Panc1 (cell line): ENCODE measurements at regions of chr6 and their contacts with region 1.

Region 1: DNA sequence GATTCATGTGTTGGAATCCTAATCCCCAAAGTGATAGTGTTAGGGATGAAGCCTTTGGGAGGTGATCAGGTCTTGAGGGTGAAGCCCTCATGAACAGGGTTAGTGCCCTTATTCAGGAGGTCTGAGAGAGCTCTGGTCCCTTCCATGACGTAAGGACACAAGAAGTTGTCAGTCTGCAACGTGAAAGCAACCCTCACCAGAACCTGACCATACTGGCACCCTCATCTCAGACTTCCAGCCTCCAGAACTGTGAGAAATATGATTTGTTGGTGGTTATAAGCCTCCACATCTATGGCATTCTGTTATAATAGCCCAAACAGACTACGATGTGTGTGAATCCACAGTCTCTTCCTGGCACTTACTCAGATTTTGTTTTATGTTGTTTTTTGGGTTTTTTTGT is 90.7 kb downstream of the TRERF1 start:
- DNase-seq: no peak
- ATAC-seq: no peak
- H3K4me3 ChIP-seq: no peak overlapping the region
- H3K27ac ChIP-seq: no peak overlapping the region
- H3K4me1 ChIP-seq: peaks cover 15% of the 10 kb centered on the region
- H3K27me3 ChIP-seq: no peaks in the 10 kb centered on the region
- CTCF ChIP-seq: no peak

Region 2: DNA sequence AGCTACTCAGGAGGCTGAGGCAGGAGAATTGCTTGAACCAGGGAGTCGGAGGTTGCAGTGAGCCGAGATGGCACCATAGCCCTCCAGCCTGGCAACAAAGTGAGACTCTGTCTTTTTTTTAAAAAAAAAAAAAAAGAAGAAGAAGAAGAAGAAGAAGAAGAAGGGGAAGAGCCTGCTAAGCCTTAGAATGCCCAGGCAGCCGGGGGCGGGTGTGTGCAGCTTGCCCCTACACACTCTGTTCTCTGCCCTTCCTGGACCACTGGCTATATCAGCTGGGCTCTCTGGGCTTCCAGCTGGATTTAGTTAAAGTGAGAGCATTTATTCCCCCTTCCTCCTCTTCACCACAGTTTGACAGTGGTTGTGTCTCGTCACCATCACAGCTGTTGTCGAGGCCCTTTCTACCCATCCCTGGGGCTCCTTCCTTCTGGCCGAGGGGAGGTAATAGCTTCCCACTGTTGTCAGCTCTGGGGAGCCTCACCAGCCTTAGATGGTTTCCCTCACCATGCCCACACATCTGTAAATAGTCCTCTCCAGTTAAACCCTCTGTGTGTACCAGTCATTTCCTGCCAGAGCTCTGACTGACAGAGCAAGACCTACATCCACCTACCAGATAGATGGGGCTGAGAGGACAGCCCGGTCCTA is 13.1 kb after region 1 on chr6:
- CTCF ChIA-PET with region 1: no interaction called
- POLR2A ChIA-PET with region 1: no interaction called
- in situ Hi-C with region 1: no loop called
- intact Hi-C with region 1: no loop called
- DNase-seq: no peak
- ATAC-seq: no peak
- H3K4me3 ChIP-seq: no peak overlapping the region
- H3K27ac ChIP-seq: no peak overlapping the region
- H3K4me1 ChIP-seq: peaks cover 9% of the 10 kb centered on the region
- H3K27me3 ChIP-seq: no peaks in the 10 kb centered on the region
- CTCF ChIP-seq: no peak

Region 3: DNA sequence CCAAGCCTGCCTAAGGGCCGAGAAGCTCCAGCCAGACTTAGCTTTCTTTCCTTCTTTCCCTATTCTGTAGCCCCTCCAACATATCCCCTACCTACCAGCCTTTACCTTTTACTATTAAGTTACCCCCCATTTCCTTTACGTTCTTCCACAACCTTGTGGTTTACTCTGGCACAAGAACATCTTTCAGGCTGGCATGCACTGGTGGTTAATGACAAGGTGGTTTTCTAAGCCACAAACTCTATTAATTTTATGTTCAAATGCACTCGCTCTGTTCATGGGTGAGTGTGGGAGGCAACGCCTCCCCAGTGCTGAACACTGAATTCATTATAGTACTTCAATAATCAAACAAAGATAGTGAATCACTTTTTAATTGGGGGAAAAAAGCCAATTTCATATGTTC is 26.3 kb after region 1 on chr6:
- CTCF ChIA-PET with region 1: no interaction called
- POLR2A ChIA-PET with region 1: interaction called, 14 read pairs
- in situ Hi-C with region 1: no loop called
- intact Hi-C with region 1: no loop called
- DNase-seq: no peak
- ATAC-seq: no peak
- H3K4me3 ChIP-seq: no peak overlapping the region
- H3K27ac ChIP-seq: no peak overlapping the region
- H3K4me1 ChIP-seq: peaks cover 10% of the 10 kb centered on the region; the same call in 1 of the 2 replicates
- H3K27me3 ChIP-seq: no peaks in the 10 kb centered on the region
- CTCF ChIP-seq: no peak